Activated naive CD4-positive, alpha-beta T cell treated with anti-CD3 and anti-CD28 coated beads for 36 hours (primary cell): ENCODE measurements at regions of chr9 and their contacts with region 1.

Region 1: DNA sequence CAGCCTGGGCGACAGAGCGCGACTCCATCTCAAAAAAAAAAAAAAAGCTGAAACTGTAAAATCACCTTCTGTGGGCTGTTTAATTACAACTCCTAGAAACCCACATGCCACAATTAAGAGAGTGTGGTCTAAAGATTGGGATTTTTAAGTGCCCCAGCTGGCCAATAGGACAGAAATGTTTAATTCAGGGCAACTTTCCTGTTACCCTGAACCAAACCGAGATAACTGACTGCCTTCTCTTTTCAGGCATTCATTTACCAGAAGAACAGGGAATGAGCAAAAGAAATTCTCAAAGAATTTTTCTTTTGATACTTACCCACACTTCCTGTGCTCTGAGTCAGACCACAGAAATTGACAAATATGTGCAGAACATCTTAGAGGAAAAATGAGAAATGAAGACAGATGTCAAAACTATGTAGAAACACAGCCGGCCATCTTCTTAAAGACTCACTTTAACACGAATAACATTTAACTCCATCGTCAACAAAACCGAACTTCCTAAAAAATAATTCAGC is 221.3 kb upstream of the DAPK1 start:
- DNase-seq: peak; percentile 8
- H3K4me3 Mint-ChIP-seq: no peak overlapping the region
- H3K27ac Mint-ChIP-seq: peak overlapping the region; percentile 70
- H3K4me1 Mint-ChIP-seq: peaks cover 15% of the 10 kb centered on the region
- H3K27me3 Mint-ChIP-seq: peaks cover 13% of the 10 kb centered on the region

Region 2: GRCh38 chr9:87122947-87123685 is 153.3 kb before region 1 on chr9:
- CTCF ChIA-PET with region 1: no interaction called
- intact Hi-C with region 1: loop called (anchors 1 kb)
- DNase-seq: peak; percentile 51
- H3K4me3 Mint-ChIP-seq: no peak overlapping the region
- H3K27ac Mint-ChIP-seq: peak overlapping the region; percentile 6
- H3K4me1 Mint-ChIP-seq: peaks cover 10% of the 10 kb centered on the region
- H3K27me3 Mint-ChIP-seq: peaks cover 24% of the 10 kb centered on the region

Region 3: DNA sequence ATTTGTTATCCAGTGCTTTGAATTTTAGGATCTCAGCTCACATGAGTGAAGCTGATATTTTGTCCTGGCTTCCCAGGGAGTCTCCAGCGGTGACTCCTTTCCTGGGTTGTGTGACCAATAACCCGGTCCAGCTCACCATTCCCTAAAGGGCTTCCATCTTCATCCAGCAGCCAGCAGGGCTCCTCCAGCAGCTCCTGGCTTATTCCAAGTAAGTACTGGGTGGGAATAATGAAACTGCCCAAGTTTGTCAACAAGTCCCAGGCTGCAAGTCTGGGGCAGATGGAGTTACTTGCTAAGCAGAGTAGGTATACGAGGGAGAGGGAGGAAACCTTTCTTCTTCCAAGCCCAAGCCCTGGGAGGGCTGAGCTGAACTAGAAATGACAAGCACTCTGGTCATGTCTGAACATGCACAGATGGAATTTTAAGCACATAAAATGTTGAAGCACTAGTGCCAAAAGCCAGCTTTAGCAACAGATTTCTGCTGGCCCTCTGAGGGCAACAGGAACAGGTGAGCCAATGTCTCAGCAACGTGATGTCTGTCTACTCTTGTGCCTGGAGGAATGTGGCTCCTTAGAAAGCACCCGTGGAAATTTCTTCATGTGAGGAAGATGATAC is 67.5 kb after region 1 on chr9:
- CTCF ChIA-PET with region 1: no interaction called
- intact Hi-C with region 1: no loop called
- DNase-seq: no peak
- H3K4me3 Mint-ChIP-seq: no peak overlapping the region
- H3K27ac Mint-ChIP-seq: no peak overlapping the region
- H3K4me1 Mint-ChIP-seq: no peaks in the 10 kb centered on the region
- H3K27me3 Mint-ChIP-seq: peaks cover 28% of the 10 kb centered on the region

Region 4: DNA sequence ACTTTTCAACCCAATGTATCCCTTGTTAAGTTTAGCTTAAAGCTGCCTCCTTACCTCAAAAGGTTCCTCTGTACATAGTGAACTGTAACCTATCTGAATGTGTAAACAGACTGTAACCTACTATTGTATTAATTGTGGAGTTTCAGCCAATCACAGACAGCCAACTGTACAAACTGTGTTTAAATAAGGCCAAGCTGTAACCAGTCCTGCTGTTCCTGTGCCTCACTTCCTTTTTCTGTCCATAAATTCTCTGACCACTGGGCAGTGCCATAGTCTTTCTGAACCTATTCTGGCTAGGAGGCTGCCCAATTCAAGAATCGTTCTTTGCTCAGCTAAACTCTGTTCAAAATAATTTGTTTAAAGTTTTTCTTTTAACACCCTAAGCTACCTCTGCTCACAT is 146.6 kb after region 1 on chr9:
- CTCF ChIA-PET with region 1: no interaction called
- intact Hi-C with region 1: no loop called
- DNase-seq: no peak
- H3K4me3 Mint-ChIP-seq: no peak overlapping the region
- H3K27ac Mint-ChIP-seq: no peak overlapping the region
- H3K4me1 Mint-ChIP-seq: no peaks in the 10 kb centered on the region
- H3K27me3 Mint-ChIP-seq: peaks cover 8% of the 10 kb centered on the region